ENCODE measurements at regions of chr14 and their contacts with region 1.

Region 1: DNA sequence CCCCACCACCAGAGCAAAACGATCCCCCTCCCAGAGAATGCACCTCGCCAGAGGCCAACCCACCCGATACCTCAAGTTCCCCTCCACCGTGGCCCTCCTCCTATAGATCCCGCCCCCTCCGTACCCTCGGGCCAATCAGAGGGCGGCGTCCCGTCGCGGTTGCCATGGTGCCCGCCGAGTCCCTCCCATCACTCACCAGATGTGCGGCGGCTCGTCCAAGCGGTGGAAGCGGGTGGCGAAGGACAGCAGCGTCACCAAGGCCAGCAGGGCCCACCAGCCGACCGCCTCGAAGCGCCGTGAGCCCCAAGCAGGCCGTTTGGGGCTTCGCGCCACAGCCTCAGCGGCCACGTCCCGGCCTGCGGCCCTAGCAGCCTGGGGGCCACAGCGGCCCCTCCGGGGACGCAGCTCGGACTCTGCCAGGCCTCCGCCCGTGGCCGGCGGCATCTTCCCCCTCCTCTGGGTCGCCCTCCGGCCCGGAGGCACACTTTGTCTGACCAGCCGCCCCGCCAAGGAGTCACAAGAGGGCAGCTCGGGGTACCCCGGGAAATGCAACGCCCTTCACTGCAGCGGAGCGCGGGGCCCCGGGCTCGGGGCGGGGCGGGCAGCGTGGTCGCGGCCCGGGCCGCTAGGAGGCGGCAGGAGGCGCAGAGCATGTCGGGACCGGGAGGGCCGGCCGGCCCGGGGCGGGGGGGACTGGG is at the start of gene POMT2:
- DNase-seq: peak; percentile 88 to 92 (median 91)
- H3K4me3 ChIP-seq: peak within 1 kb of the TSS; percentile 82 to 96 (median 83)
- H3K4me3 Mint-ChIP-seq: peak within 1 kb of the TSS; percentile 98
- H3K27ac ChIP-seq: peak within 1 kb of the TSS; percentile 94 to 96
- H3K27ac Mint-ChIP-seq: peak within 1 kb of the TSS; percentile 97 to 100 (median 99)
- H3K4me1 ChIP-seq: peaks cover 12 to 23% of the 10 kb centered on the region in 2 donors
- H3K4me1 Mint-ChIP-seq: peaks cover 19% of the 10 kb centered on the region
- H3K27me3 ChIP-seq: no peaks in the 10 kb centered on the region
- H3K27me3 Mint-ChIP-seq: no peaks in the 10 kb centered on the region
- CTCF ChIP-seq: peak; percentile 56
- polyA plus RNA-seq, gene POMT2: 1.5 to 8.9 (median 1.8) TPM

Region 2: GRCh38 chr14:76876076-76876475 is 444.3 kb before region 1 on chr14:
- intact Hi-C with region 1: loop called in 1 of 2 experiments (anchors 10 kb)
- DNase-seq: peak; percentile 43 to 69 (median 65)
- H3K4me3 ChIP-seq: no peak overlapping the region
- H3K4me3 Mint-ChIP-seq: no peak overlapping the region
- H3K27ac ChIP-seq: no peak overlapping the region
- H3K27ac Mint-ChIP-seq: peak overlapping the region in 2 of 7 donors; percentile 15 to 50
- H3K4me1 ChIP-seq: no peaks in the 10 kb centered on the region
- H3K4me1 Mint-ChIP-seq: peaks cover 2% of the 10 kb centered on the region
- H3K27me3 ChIP-seq: no peaks in the 10 kb centered on the region
- H3K27me3 Mint-ChIP-seq: peaks cover 0 to 4% (median 2%) of the 10 kb centered on the region in 3 donors
- CTCF ChIP-seq: peak; percentile 87

Region 3: GRCh38 chr14:77097700-77098528 is 222.5 kb before region 1 on chr14 and contains the start of gene CIPC:
- intact Hi-C with region 1: loop called in 1 of 2 experiments (anchors 5 kb)
- DNase-seq: peak; percentile 99 to 100 (median 99)
- H3K4me3 ChIP-seq: peak within 1 kb of the TSS; percentile 61 to 91 (median 64)
- H3K4me3 Mint-ChIP-seq: peak within 1 kb of the TSS; percentile 87 to 94
- H3K27ac ChIP-seq: peak within 1 kb of the TSS; percentile 90 to 96
- H3K27ac Mint-ChIP-seq: peak within 1 kb of the TSS; percentile 94 to 98 (median 97)
- H3K4me1 ChIP-seq: peaks cover 24 to 29% of the 10 kb centered on the region in 2 donors
- H3K4me1 Mint-ChIP-seq: peaks cover 28% of the 10 kb centered on the region
- H3K27me3 ChIP-seq: no peaks in the 10 kb centered on the region
- H3K27me3 Mint-ChIP-seq: peaks cover 0 to 2% (median 1%) of the 10 kb centered on the region in 3 donors
- CTCF ChIP-seq: no peak
- polyA plus RNA-seq, gene CIPC: 4.4 to 11.2 (median 7.0) TPM

Region 4: GRCh38 chr14:77151918-77152588 is 168.3 kb before region 1 on chr14:
- intact Hi-C with region 1: loop called in 1 of 2 experiments (anchors 5 kb)
- DNase-seq: peak in 1 of 3 donors; percentile 10
- H3K4me3 ChIP-seq: no peak overlapping the region
- H3K4me3 Mint-ChIP-seq: no peak overlapping the region
- H3K27ac ChIP-seq: no peak overlapping the region
- H3K27ac Mint-ChIP-seq: no peak overlapping the region
- H3K4me1 ChIP-seq: no peaks in the 10 kb centered on the region
- H3K4me1 Mint-ChIP-seq: peaks cover 2% of the 10 kb centered on the region
- H3K27me3 ChIP-seq: peaks cover under 1 to 5% of the 10 kb centered on the region in 2 donors
- H3K27me3 Mint-ChIP-seq: peaks cover 9 to 21% (median 18%) of the 10 kb centered on the region in 3 donors
- CTCF ChIP-seq: peak; percentile 25

Region 5: DNA sequence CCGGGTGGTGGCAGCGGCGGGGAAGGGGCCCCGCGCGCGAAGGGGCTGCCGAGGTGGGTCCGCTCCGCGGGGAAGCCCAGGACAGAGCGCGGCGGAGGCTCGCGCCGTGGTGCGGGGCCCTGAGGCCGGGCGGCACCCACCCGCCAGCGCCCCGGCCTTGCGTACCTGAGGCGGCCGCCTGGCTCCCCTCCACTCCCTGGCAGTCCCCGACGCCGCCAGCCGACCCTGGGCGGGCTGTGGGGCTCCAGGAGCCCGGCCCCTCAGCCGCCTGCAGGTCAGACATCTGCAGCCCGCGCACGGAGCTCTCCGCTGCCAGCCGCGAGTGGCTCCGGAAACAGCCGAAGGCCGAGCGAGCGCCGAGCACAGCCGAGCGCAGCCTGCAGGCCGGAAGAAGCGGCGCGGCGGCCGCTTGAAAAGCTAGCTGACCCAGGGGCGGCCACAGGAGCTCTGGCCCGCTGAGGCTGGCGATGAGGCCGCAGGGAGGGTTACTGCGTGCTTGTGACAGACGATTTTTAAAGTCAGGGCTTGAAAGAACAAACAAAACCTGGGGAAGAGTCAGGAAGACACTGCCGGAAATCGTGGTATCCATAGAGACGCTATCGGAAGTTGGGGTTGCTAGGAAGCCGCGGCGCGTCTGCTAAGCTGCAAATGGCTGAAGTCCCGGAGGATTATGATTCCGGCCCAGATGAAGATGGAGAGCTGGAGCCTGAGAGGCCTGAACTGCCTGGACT is 56.5 kb after region 1 on chr14 and contains the starts of genes SAMD15 and TMED8:
- intact Hi-C with region 1: loop called (anchors 5 kb)
- DNase-seq: peak; percentile 63 to 71 (median 70)
- H3K4me3 ChIP-seq: peak within 1 kb of the TSS; percentile 75 to 99 (median 89)
- H3K4me3 Mint-ChIP-seq: peak within 1 kb of the TSS; percentile 88 to 95
- H3K27ac ChIP-seq: peak within 1 kb of the TSS; percentile 18 to 79
- H3K27ac Mint-ChIP-seq: peak within 1 kb of the TSS; percentile 43 to 93 (median 87)
- H3K4me1 ChIP-seq: peaks cover 42 to 45% of the 10 kb centered on the region in 2 donors
- H3K4me1 Mint-ChIP-seq: peaks cover 41% of the 10 kb centered on the region
- H3K27me3 ChIP-seq: no peaks in the 10 kb centered on the region
- H3K27me3 Mint-ChIP-seq: peaks cover 0 to 2% (median 0%) of the 10 kb centered on the region in 3 donors
- CTCF ChIP-seq: no peak
- polyA plus RNA-seq, gene SAMD15: 0.08 to 0.65 TPM in 2 of 3 donors, not detected in the other
- polyA plus RNA-seq, gene TMED8: 5.4 to 6.2 (median 6.1) TPM

Region 6: GRCh38 chr14:77457522-77458290 is 137.3 kb after region 1 on chr14 and contains the starts of genes AHSA1 and VIPAS39:
- intact Hi-C with region 1: loop called (anchors 2 to 5 kb)
- DNase-seq: peak; percentile 96 to 98 (median 97)
- H3K4me3 ChIP-seq: peak within 1 kb of the TSS; percentile 80 to 92 (median 87)
- H3K4me3 Mint-ChIP-seq: peak within 1 kb of the TSS; percentile 100
- H3K27ac ChIP-seq: peak within 1 kb of the TSS; percentile 66 to 85
- H3K27ac Mint-ChIP-seq: peak within 1 kb of the TSS; percentile 96 to 100 (median 99)
- H3K4me1 ChIP-seq: peaks cover 19 to 31% of the 10 kb centered on the region in 2 donors
- H3K4me1 Mint-ChIP-seq: peaks cover 25% of the 10 kb centered on the region
- H3K27me3 ChIP-seq: no peaks in the 10 kb centered on the region
- H3K27me3 Mint-ChIP-seq: no peaks in the 10 kb centered on the region
- CTCF ChIP-seq: no peak
- polyA plus RNA-seq, gene AHSA1: 59.5 to 72.5 (median 71.5) TPM
- polyA plus RNA-seq, gene VIPAS39: 8.1 to 17.8 (median 10.8) TPM

Measured in CD14-positive monocyte (primary cell).